ENCODE measurements at regions of chr3 and their contacts with region 1.

Region 1: DNA sequence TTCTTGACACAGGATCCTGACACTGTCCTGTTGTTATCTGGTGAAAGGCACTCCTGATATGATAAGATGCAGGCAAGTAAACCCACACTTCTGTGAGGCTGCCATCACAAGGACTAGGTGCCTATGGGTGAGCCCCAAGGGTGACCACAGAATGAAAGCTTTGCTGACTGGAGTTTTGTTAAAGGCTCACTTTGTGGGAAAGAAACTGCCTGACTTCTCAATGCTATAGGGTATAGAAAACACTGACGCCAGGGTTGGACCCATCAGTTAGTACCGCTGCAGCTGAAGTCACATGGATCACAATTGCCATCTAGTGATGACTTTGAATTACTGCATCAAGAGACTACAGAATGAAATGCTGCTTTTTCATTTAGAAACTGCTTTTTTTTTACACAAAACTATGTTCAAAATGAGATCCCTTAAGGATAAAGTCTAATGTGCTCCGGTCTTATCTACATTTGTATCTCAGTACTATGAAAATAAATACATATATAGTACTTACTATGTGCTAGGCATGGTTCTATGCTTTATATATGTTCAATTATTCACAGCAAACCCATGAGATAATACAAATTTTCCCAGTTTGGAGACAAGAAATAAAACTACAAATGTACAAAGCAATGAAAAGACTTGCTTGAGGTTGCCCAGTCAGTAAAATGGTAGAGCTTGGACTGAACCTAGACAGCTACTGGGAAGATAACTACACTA is 64.2 kb upstream of the CMSS1 start:
- DNase-seq: no peak
- H3K4me3 ChIP-seq: no peak overlapping the region
- H3K27ac ChIP-seq: no peak overlapping the region
- H3K4me1 ChIP-seq: peaks cover 0 to 24% (median 10%) of the 10 kb centered on the region in 4 donors
- H3K27me3 ChIP-seq: no peaks in the 10 kb centered on the region
- CTCF ChIP-seq: peak; percentile 36 to 71 (median 55)
- EP300 ChIP-seq: no peak
- POLR2A ChIP-seq: no peak

Region 2: DNA sequence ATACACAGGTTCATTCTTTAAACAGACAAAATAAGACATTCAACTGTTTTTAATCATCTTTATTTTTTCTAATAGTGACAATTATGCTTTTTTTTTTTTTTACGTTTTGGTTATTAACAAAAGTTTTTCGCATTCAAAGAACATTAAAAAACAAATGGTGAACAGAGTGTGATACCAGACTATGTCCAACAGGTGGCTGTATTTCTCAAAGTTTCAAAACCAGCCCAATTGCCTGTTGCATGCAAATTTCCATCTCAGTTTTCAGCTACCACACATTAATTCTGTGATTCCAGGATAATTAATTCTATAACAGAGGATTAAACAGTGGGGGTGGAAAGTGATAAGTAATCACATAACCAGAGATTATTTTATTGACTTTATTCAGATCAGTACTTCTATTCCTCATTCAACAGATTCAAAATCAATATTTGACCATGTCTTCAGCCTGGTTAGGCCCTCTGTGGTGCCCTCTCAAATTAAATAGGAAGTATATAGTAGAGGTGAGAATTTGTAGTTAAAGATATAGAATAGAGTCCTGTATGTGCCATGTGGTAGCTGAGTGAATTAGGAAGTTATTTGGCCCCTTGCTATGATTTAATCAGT is 729.7 kb before region 1 on chr3:
- intact Hi-C with region 1: loop called (anchors 1 kb)
- DNase-seq: no peak
- H3K4me3 ChIP-seq: no peak overlapping the region
- H3K27ac ChIP-seq: no peak overlapping the region
- H3K4me1 ChIP-seq: no peaks in the 10 kb centered on the region
- H3K27me3 ChIP-seq: no peaks in the 10 kb centered on the region
- CTCF ChIP-seq: peak; percentile 49 to 69 (median 59)
- EP300 ChIP-seq: no peak
- POLR2A ChIP-seq: no peak

Region 3: GRCh38 chr3:99499235-99500158 is 253.9 kb before region 1 on chr3:
- intact Hi-C with region 1: loop called (anchors 2 kb)
- DNase-seq: no peak
- H3K4me3 ChIP-seq: no peak overlapping the region
- H3K27ac ChIP-seq: no peak overlapping the region
- H3K4me1 ChIP-seq: peaks cover 0 to 35% (median 27%) of the 10 kb centered on the region in 4 donors
- H3K27me3 ChIP-seq: no peaks in the 10 kb centered on the region
- CTCF ChIP-seq: peak in 3 of 4 experiments; percentile 33 to 62 (median 56)
- EP300 ChIP-seq: no peak
- POLR2A ChIP-seq: no peak